Endothelial cell of umbilical vein (primary cell): ENCODE measurements at regions of chr1 and their contacts with region 1.

Region 1: GRCh38 chr1:94792473-94793295 is 27.5 kb upstream of the SLC44A3 start:
- DNase-seq: peak; percentile 91
- H3K4me3 ChIP-seq: peak overlapping the region in 1 of 3 experiments; percentile 12
- H3K27ac ChIP-seq: peak overlapping the region; percentile 84
- H3K4me1 ChIP-seq: peaks cover 48% of the 10 kb centered on the region
- H3K27me3 ChIP-seq: no peaks in the 10 kb centered on the region
- CTCF ChIP-seq: no peak
- POLR2A ChIP-seq: no peak

Region 2: DNA sequence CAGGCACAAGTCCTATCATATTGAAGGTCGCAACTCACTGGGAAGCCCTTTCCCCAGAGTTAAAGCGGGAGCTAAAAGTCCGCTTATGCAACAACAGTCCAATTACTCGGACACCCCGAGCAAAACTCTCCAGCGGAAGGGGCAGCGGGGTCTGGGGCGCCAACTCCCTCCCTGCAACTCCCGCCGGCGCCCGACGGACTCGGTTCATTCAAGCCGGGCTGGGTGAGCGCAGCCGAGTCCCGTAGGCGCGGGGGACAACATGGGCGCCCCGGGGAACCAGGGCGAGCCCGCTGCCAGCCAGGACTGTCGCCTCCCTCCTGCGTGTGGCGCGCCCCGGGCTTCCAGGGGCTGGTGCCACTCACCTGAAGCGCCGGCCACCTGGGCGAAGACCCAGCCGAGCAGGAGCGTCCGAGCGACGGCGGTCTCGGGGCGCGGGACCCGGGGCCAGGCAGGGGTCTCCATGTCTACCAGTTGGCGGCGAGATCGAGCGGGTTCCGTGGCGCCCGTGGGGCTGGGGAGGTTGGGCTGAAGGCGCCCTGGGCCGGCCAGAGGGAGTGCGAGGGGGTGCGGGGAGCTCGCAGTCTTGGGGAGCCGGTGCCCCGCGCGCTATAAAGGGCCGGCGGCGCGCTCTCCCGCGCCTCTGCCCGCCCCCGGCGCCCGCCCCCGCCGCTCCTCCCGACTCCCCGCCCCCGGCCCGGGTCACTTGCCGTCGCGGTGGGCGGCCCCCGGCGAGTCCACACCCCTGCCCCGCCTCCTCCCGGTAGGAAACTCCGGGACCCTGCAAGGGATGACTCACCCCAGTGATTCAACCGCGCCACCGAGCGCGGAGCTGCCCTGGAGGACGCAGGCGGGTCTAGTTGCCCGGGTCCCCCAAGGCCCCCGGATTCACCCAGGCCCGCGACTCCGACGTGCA is 251.3 kb before region 1 on chr1 and contains the start of gene F3:
- CTCF ChIA-PET with region 1: interaction called, 3 read pairs
- POLR2A ChIA-PET with region 1: no interaction called
- dilution Hi-C with region 1: no loop called
- intact Hi-C with region 1: loop called (anchors 2 kb)
- DNase-seq: peak; percentile 87
- H3K4me3 ChIP-seq: peak within 1 kb of the TSS; percentile 41 to 59 (median 59)
- H3K27ac ChIP-seq: peak within 1 kb of the TSS; percentile 23
- H3K4me1 ChIP-seq: peaks cover 24% of the 10 kb centered on the region
- H3K27me3 ChIP-seq: no peaks in the 10 kb centered on the region
- CTCF ChIP-seq: no peak
- POLR2A ChIP-seq: no peak
- total RNA-seq, gene F3: 1.9 and 2.3 TPM in 2 replicates

Region 3: DNA sequence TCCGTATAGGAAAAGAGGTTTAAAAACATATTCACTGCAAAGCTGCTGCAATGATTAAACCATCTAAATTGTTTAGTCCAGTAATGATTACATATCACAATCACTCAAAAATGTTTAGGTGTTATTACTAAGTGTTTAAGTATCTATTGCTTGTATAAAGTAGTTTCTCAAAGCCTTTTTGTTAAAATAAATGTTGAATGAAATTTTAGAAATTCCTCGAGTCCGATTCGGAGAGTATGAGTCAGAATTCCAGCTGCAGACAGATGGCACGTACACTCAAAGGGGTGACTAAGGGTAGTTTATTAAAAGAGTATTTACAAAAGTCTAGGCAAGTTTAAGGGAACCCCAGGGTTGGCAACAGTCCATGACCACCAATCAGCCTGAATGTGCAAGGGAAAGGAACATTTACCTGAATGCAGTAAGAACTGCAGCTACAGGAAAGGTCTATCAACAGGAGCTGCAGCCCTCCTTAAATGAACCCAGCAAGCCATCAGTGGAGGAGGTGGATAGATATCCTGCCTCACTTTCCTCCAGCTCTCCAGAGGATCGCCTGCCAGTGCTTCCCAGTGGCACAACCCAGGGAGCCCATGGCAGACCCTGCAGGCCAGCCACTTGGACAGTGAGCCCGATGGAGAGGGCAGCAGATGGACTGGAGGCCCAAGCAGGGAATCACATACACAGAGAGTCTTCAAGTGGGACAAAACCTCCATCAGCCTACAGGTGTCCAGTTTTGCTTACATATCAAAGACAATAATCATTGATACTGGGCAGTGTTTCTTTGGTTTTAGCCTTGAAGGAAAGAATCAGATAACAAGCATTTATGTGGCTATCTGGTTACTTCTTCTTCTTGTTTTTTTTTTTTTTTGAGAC is 64.6 kb before region 1 on chr1:
- CTCF ChIA-PET with region 1: no interaction called
- POLR2A ChIA-PET with region 1: no interaction called
- dilution Hi-C with region 1: no loop called
- intact Hi-C with region 1: loop called (anchors 2 kb)
- DNase-seq: peak; percentile 73
- H3K4me3 ChIP-seq: no peak overlapping the region
- H3K27ac ChIP-seq: no peak overlapping the region
- H3K4me1 ChIP-seq: peaks cover 17% of the 10 kb centered on the region
- H3K27me3 ChIP-seq: no peaks in the 10 kb centered on the region
- CTCF ChIP-seq: no peak
- POLR2A ChIP-seq: no peak

Region 4: GRCh38 chr1:94734963-94735899 is 57.5 kb before region 1 on chr1:
- CTCF ChIA-PET with region 1: interaction called, 3 read pairs
- POLR2A ChIA-PET with region 1: no interaction called
- dilution Hi-C with region 1: no loop called
- intact Hi-C with region 1: loop called (anchors 1 kb)
- DNase-seq: peak; percentile 57
- H3K4me3 ChIP-seq: no peak overlapping the region
- H3K27ac ChIP-seq: peak overlapping the region; percentile 58
- H3K4me1 ChIP-seq: peaks cover 25% of the 10 kb centered on the region
- H3K27me3 ChIP-seq: no peaks in the 10 kb centered on the region
- CTCF ChIP-seq: no peak
- POLR2A ChIP-seq: no peak